ENCODE measurements at regions of chr3 and their contacts with region 1.

Region 1: DNA sequence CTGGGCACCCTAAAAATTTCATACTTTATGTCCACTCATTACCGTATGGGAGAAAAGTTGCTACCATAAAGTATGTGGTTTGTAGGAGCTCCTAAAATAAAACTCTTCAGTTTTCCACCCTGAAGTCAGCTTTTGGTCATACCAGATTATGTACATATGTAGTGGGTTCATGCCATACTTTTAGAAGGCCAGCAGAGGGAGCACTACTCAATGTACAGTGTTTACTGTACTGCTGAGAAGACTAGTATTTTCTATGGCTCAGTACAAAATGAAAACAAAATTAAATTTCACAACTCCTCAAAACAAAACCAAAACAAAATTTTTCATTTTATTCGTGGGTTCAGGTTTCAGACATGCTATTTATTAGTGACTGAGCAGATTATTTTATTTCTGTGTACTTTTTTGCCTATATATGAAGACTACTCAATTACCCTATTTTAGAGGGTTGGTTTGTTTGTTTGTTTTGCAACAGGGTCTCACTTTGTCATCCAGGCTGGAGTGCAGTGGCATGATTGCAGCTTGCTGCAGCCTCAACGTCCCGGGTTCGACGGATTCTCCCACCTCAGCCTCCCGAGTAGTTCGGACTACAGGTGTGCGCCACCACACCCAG is 24.3 kb downstream of the NXPE3 start:
- DNase-seq: peak; percentile 55
- H3K4me3 ChIP-seq: no peak overlapping the region
- H3K27ac ChIP-seq: no peak overlapping the region
- H3K4me1 ChIP-seq: no peaks in the 10 kb centered on the region
- H3K27me3 ChIP-seq: no peaks in the 10 kb centered on the region
- CTCF ChIP-seq: peak; percentile 61 to 66
- POLR2A ChIP-seq: no peak

Region 2: DNA sequence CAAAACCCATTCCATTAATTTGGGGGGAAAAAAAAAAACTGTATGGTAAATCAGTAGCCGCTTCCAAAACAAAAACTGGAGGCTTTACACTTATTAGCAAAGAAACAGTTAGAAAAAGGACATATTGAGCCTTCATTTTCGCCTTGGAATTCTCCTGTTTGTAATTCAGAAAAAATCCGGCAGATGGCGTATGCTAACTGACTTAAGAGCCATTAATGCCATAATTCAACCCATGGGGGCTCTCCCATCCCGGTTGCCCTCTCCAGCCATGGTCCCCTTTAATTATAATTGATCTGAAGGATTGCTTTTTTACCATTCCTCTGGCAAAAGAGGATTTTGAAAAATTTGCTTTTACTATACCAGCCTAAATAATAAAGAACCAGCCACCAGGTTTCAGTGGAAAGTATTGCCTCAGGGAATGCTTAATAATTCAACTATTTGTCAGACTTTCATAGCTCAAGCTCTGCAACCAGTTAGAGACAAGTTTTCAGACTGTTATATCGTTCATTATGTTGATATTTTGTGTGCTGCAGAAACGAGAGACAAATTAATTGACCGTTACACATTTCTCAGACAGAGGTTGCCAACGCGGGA is 107.4 kb before region 1 on chr3:
- CTCF ChIA-PET with region 1: interaction called, 3 read pairs
- POLR2A ChIA-PET with region 1: no interaction called
- dilution Hi-C with region 1: no loop called
- intact Hi-C with region 1: loop called (anchors 2 kb)
- DNase-seq: peak; percentile 68
- H3K4me3 ChIP-seq: no peak overlapping the region
- H3K27ac ChIP-seq: no peak overlapping the region
- H3K4me1 ChIP-seq: no peaks in the 10 kb centered on the region
- H3K27me3 ChIP-seq: no peaks in the 10 kb centered on the region
- CTCF ChIP-seq: peak; percentile 50 to 52
- POLR2A ChIP-seq: no peak

Region 3: DNA sequence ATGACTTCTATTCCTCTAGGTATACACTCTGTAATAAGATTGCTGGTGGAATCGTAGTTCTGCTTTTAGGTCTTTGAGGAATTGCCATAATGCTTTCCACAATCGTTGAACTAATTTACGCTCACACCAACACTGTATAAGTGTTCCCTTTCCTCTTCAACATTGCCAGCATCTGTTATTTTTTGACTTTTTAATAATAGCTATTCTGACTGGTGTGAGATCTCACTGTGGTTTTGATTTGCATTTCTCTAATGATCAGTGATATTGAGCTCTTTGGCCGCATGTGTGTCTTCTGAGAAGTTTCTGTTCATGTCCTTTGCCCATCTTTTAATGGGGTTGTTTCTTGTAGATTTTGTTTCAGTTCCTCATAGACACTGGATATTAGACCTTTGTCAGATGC is 11.5 kb before region 1 on chr3:
- CTCF ChIA-PET with region 1: interaction called, 10 read pairs
- POLR2A ChIA-PET with region 1: no interaction called
- dilution Hi-C with region 1: no loop called
- intact Hi-C with region 1: no loop called
- DNase-seq: no peak
- H3K4me3 ChIP-seq: no peak overlapping the region
- H3K27ac ChIP-seq: no peak overlapping the region
- H3K4me1 ChIP-seq: peaks cover 3% of the 10 kb centered on the region
- H3K27me3 ChIP-seq: no peaks in the 10 kb centered on the region
- CTCF ChIP-seq: no peak
- POLR2A ChIP-seq: no peak

Region 4: GRCh38 chr3:102643546-102643945 is 840.3 kb after region 1 on chr3:
- CTCF ChIA-PET with region 1: no interaction called
- POLR2A ChIA-PET with region 1: no interaction called
- dilution Hi-C with region 1: no loop called
- intact Hi-C with region 1: no loop called
- DNase-seq: no peak
- H3K4me3 ChIP-seq: no peak overlapping the region
- H3K27ac ChIP-seq: no peak overlapping the region
- H3K4me1 ChIP-seq: no peaks in the 10 kb centered on the region
- H3K27me3 ChIP-seq: no peaks in the 10 kb centered on the region
- CTCF ChIP-seq: no peak
- POLR2A ChIP-seq: no peak

Measured in endothelial cell of umbilical vein (primary cell).